ENCODE measurements at regions of chr9 and their contacts with region 1.

Region 1: GRCh38 chr9:5749306-5749705 is 83.6 kb downstream of the ERMP1 start:
- DNase-seq: no peak
- CTCF ChIP-seq: no peak

Region 2: DNA sequence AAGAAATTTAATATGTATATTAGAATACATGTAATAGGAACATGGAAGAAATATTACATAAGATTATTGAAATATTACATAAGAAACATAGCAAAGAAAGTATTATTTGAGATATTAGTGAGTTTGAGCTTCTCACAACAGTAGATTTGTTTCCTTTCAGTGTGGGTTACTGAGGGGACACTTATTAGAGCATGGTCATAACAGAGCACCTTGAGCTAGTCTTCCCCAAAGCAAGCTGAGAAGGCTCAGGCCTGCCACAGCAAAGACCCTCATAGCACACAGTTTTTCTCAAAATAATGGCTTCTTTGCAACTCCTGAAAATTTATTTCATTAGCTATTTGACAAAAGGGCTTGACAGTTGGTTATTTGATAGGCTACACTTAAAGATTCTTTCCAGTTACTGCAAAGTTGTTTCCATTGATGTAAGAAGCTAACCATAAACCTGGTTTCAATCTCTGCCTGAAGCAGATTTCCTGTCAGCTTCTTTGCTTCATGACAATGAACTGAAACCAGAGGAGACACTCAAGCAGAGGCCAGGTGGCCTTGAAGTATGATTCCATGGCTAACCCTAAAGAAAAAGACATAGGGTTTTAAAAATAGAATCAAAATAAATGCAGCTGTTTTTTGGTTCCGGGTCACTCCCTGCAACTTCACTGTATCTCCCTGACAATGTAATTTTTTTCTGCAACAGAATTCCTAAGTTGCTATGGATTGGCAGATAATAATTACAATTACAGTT is 15.0 kb after region 1 on chr9:
- CTCF ChIA-PET with region 1: interaction called, 19 read pairs
- POLR2A ChIA-PET with region 1: interaction called, 7 read pairs
- DNase-seq: peak; percentile 48
- CTCF ChIP-seq: no peak

Region 3: GRCh38 chr9:6133346-6134063 is 384.2 kb after region 1 on chr9:
- CTCF ChIA-PET with region 1: no interaction called
- POLR2A ChIA-PET with region 1: no interaction called
- DNase-seq: peak; percentile 39
- CTCF ChIP-seq: no peak